ENCODE measurements at regions of chr11 and their contacts with region 1.

Region 1: GRCh38 chr11:44095506-44096394 is at the start of gene EXT2:
- DNase-seq: peak; percentile 61
- H3K4me3 ChIP-seq: peak within 1 kb of the TSS; percentile 82
- H3K27ac ChIP-seq: no peak within 1 kb of the TSS
- H3K27me3 ChIP-seq: peaks cover 8% of the 10 kb centered on the region
- CTCF ChIP-seq: peak; percentile 90
- polyA plus RNA-seq, gene EXT2: 128 and 138 TPM in 2 replicates

Region 2: GRCh38 chr11:44065841-44066731 is 29.7 kb before region 1 on chr11 and contains the start of gene ACCS:
- CTCF ChIA-PET with region 1: interaction called, 16 read pairs
- POLR2A ChIA-PET with region 1: no interaction called
- DNase-seq: peak; percentile 74
- H3K4me3 ChIP-seq: peak within 1 kb of the TSS; percentile 71
- H3K27ac ChIP-seq: peak within 1 kb of the TSS; percentile 81
- H3K27me3 ChIP-seq: peaks cover 5% of the 10 kb centered on the region
- CTCF ChIP-seq: peak; percentile 65
- polyA plus RNA-seq, gene ACCS: 7.0 and 7.8 TPM in 2 replicates

Region 3: GRCh38 chr11:44083906-44084305 is 11.8 kb before region 1 on chr11:
- CTCF ChIA-PET with region 1: interaction called, 67 read pairs
- POLR2A ChIA-PET with region 1: no interaction called
- DNase-seq: no peak
- H3K4me3 ChIP-seq: no peak overlapping the region
- H3K27ac ChIP-seq: no peak overlapping the region
- H3K27me3 ChIP-seq: peaks cover 2% of the 10 kb centered on the region
- CTCF ChIP-seq: no peak

Region 4: DNA sequence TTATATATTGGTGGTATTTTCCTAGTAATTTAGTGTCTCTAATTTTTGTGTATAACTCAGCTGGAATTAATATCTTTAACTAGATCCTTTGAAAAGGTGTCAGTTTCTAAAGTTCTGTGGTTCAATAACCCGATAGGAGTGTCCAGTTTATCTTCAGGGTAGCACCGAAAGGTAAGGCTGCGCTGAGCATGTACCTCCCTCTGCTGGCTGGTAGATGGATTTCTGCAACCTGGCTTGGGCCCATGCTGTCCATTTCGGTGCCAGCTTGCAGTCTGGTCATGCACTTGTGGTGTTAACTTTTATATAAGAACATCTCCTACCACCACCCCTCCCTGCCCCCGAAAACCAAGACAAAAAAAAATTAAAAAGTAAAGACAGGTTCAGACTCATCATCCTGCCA is 24.4 kb after region 1 on chr11:
- CTCF ChIA-PET with region 1: interaction called, 17 read pairs
- POLR2A ChIA-PET with region 1: no interaction called
- DNase-seq: no peak
- H3K4me3 ChIP-seq: no peak overlapping the region
- H3K27ac ChIP-seq: no peak overlapping the region
- H3K27me3 ChIP-seq: no peaks in the 10 kb centered on the region
- CTCF ChIP-seq: peak; percentile 30; the same call in 1 of the 2 replicates

Region 5: GRCh38 chr11:44143943-44144909 is 48.5 kb after region 1 on chr11:
- CTCF ChIA-PET with region 1: interaction called, 14 read pairs
- POLR2A ChIA-PET with region 1: no interaction called
- DNase-seq: no peak
- H3K4me3 ChIP-seq: no peak overlapping the region
- H3K27ac ChIP-seq: no peak overlapping the region
- H3K27me3 ChIP-seq: no peaks in the 10 kb centered on the region
- CTCF ChIP-seq: no peak

Region 6: DNA sequence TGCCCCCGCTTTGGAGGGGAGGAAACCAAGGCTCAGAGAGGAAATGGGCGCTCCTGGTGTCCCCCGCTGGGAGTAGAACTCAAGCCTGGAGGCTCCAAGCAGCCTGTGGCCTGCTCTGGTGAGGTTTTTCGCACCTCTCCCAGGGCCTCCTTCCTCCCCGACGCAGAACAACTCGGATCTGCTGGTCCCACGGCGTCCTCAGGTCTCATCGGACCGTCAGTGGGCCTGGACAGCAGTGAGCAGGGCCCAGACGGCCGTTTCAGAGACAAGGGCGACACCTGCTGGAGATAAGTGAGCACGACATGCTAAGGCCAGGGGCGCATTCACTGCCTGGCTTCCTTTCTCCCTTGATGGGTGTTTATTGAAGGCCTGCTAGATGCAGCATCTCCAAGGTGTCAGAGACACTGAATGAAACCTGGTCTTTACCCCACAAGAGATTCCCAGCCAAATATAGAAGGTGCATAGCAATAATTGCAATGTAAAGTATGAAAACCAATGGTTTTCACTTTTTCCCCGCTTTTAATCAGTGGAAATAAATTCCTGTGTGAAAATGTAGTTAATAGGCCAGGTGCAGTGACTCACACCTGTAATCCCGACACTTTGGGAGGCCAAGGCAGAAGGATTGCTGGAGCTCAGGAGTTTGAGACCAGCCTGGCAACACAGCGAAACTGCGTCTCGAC is 442.8 kb after region 1 on chr11:
- CTCF ChIA-PET with region 1: interaction called, 44 read pairs
- POLR2A ChIA-PET with region 1: no interaction called
- DNase-seq: peak; percentile 24
- H3K4me3 ChIP-seq: no peak overlapping the region
- H3K27ac ChIP-seq: no peak overlapping the region
- H3K27me3 ChIP-seq: peaks cover 21% of the 10 kb centered on the region
- CTCF ChIP-seq: peak; percentile 94

Measured in AG04450 (cell line).